Activated CD4-positive, alpha-beta T cell treated with anti-CD3 and anti-CD28 coated beads for 36 hours (primary cell): ENCODE measurements at regions of chr7 and their contacts with region 1.

Region 1: GRCh38 chr7:7681179-7681935 is 37.0 kb downstream of the RPA3 start:
- DNase-seq: peak; percentile 52
- ATAC-seq: peak; percentile 81
- H3K4me3 Mint-ChIP-seq: no peak overlapping the region
- H3K27ac Mint-ChIP-seq: peak overlapping the region; percentile 37
- H3K4me1 Mint-ChIP-seq: peaks cover 27% of the 10 kb centered on the region
- H3K27me3 Mint-ChIP-seq: no peaks in the 10 kb centered on the region

Region 2: GRCh38 chr7:7640221-7641128 is 40.9 kb before region 1 on chr7 and contains the start of gene UMAD1:
- CTCF ChIA-PET with region 1: interaction called, 20 read pairs
- POLR2A ChIA-PET with region 1: interaction called, 3 read pairs
- intact Hi-C with region 1: no loop called
- DNase-seq: peak; percentile 99
- ATAC-seq: peak; percentile 92
- H3K4me3 Mint-ChIP-seq: peak within 1 kb of the TSS; percentile 93
- H3K27ac Mint-ChIP-seq: peak within 1 kb of the TSS; percentile 99
- H3K4me1 Mint-ChIP-seq: peaks cover 38% of the 10 kb centered on the region
- H3K27me3 Mint-ChIP-seq: no peaks in the 10 kb centered on the region
- total RNA-seq, gene UMAD1: 13.1 to 14.5 TPM

Region 3: DNA sequence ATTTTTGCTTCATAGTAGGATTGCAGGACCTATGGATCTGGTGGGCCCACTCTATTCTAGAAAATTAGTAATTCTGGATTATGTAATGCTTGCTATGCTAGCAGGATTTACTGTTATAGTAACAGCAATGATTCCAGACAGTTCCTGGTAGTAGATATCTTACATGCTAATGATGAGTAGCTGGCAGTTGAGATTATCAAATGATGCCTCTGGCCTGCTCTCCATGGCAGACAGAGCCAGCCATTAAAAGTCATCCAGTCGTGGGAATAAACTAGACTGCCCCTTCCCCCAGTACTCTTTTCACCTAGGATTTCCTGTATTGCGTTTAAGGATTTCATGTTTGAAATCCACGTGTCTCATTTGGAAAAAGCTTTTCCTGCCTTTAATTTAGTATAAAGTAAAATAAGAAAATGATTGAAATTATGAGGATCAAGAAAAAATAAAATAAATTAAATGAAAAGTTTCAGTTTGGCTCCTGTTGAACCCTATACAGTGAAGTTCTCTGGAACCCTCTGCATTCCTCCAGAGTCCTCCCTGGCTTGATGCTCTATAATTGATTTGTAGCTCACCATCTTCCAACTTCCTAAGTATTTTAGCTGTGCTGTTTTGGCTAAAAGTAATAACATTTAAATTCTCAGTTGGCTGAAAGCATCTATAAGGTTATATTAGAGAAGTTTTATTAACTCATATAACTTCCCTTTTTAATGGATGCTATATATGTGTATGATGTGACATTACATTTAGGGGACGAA is 26.2 kb before region 1 on chr7:
- CTCF ChIA-PET with region 1: no interaction called
- POLR2A ChIA-PET with region 1: no interaction called
- intact Hi-C with region 1: no loop called
- DNase-seq: no peak
- ATAC-seq: no peak
- H3K4me3 Mint-ChIP-seq: no peak overlapping the region
- H3K27ac Mint-ChIP-seq: no peak overlapping the region
- H3K4me1 Mint-ChIP-seq: peaks cover 40% of the 10 kb centered on the region
- H3K27me3 Mint-ChIP-seq: no peaks in the 10 kb centered on the region

Region 4: GRCh38 chr7:7719236-7719635 is 37.9 kb after region 1 on chr7:
- CTCF ChIA-PET with region 1: interaction called, 11 read pairs
- POLR2A ChIA-PET with region 1: no interaction called
- intact Hi-C with region 1: no loop called
- DNase-seq: peak; percentile 66
- ATAC-seq: peak; percentile 99
- H3K4me3 Mint-ChIP-seq: peak overlapping the region; percentile 8
- H3K27ac Mint-ChIP-seq: peak overlapping the region; percentile 84
- H3K4me1 Mint-ChIP-seq: peaks cover 28% of the 10 kb centered on the region
- H3K27me3 Mint-ChIP-seq: no peaks in the 10 kb centered on the region

Region 5: DNA sequence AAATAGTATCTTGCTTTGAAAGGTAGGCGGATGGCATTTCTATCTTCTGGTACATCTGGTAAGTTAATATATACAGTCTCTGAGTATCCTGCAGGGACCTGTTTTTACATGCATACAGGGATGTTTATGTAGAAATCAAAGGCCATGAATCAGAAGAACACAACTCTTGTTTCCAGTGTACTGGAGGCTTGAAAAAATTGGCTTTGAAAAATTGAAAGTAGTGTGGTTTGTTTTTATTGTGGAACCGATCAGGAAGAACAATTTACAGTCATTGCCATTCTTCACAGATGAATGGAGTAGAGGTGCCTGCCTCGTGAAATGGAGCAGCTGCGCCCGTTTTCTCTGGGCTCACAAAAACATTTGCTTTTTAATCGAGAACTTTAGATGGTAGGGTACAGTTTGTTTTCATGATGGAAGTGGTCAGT is 91.1 kb after region 1 on chr7:
- CTCF ChIA-PET with region 1: interaction called, 15 read pairs
- POLR2A ChIA-PET with region 1: no interaction called
- intact Hi-C with region 1: no loop called
- DNase-seq: peak; percentile 51
- ATAC-seq: peak; percentile 96
- H3K4me3 Mint-ChIP-seq: peak overlapping the region; percentile 43
- H3K27ac Mint-ChIP-seq: peak overlapping the region; percentile 69
- H3K4me1 Mint-ChIP-seq: peaks cover 28% of the 10 kb centered on the region
- H3K27me3 Mint-ChIP-seq: no peaks in the 10 kb centered on the region

Region 6: GRCh38 chr7:8042796-8043535 is 361.6 kb after region 1 on chr7:
- CTCF ChIA-PET with region 1: no interaction called
- POLR2A ChIA-PET with region 1: no interaction called
- intact Hi-C with region 1: loop called in 1 of 2 experiments (anchors 2 kb)
- DNase-seq: no peak
- ATAC-seq: no peak
- H3K4me3 Mint-ChIP-seq: no peak overlapping the region
- H3K27ac Mint-ChIP-seq: peak overlapping the region; percentile 60
- H3K4me1 Mint-ChIP-seq: peaks cover 67% of the 10 kb centered on the region
- H3K27me3 Mint-ChIP-seq: no peaks in the 10 kb centered on the region

Region 7: GRCh38 chr7:8217200-8218068 is 536.1 kb after region 1 on chr7:
- CTCF ChIA-PET with region 1: interaction called, 19 read pairs
- POLR2A ChIA-PET with region 1: no interaction called
- intact Hi-C with region 1: loop called (anchors 1 to 2 kb)
- DNase-seq: no peak
- ATAC-seq: peak; percentile 49
- H3K4me3 Mint-ChIP-seq: no peak overlapping the region
- H3K27ac Mint-ChIP-seq: no peak overlapping the region
- H3K4me1 Mint-ChIP-seq: peaks cover 2% of the 10 kb centered on the region
- H3K27me3 Mint-ChIP-seq: no peaks in the 10 kb centered on the region